PC-9 (cell line): ENCODE measurements at regions of chr3 and their contacts with region 1.

Region 1: GRCh38 chr3:185744997-185745843 is 79.6 kb downstream of the IGF2BP2 start:
- DNase-seq: peak in 1 of 2 experiments; percentile 64
- H3K4me3 ChIP-seq: no peak overlapping the region
- H3K27ac ChIP-seq: no peak overlapping the region
- H3K4me1 ChIP-seq: peaks cover 8% of the 10 kb centered on the region; the same call in 1 of the 2 replicates
- H3K27me3 ChIP-seq: no peaks in the 10 kb centered on the region
- CTCF ChIP-seq: no peak

Region 2: GRCh38 chr3:185764163-185764979 is 19.2 kb after region 1 on chr3:
- CTCF ChIA-PET with region 1: interaction called, 10 read pairs
- POLR2A ChIA-PET with region 1: no interaction called
- intact Hi-C with region 1: no loop called
- DNase-seq: no peak
- H3K4me3 ChIP-seq: no peak overlapping the region
- H3K27ac ChIP-seq: no peak overlapping the region
- H3K4me1 ChIP-seq: peaks cover 22% of the 10 kb centered on the region
- H3K27me3 ChIP-seq: no peaks in the 10 kb centered on the region
- CTCF ChIP-seq: no peak